IMR-90 (cell line): ENCODE measurements at regions of chr15 and their contacts with region 1.

Region 1: DNA sequence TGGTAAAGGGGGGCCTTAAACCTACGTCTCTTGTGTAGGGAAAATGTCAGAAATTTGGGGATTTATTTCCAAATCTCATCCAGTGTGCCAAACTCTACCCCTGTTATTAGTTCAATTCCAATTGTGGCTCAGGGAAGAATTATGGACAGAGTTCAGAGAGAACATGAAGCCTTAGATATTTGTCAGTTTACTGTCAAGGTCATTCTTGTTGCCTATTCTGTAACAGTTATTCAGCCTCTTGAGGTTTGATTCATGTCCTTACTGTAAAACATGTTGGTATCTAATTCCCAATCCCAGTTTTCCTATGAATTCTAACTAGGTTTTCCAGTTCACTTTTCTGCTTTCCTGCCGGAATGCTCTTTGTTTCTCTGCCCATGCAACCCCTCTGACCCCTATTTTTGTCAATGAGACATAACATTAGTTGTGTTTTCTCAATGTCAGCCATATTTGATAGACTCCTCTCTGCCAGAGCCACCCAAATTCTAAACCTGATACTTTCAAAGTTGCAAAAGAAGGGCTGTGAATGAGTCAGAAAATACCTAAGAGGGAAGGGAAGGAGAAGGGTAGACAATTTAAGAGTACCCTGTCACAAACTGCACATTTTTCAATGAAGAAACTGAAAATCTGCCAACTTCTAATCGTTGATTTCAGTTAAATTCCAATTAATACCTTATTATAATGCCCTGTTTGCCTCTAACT is 52.4 kb downstream of the ATOSA start:
- DNase-seq: no peak
- ATAC-seq: no peak
- H3K4me3 ChIP-seq: no peak overlapping the region
- H3K27ac ChIP-seq: no peak overlapping the region
- H3K4me1 ChIP-seq: no peaks in the 10 kb centered on the region
- H3K27me3 ChIP-seq: no peaks in the 10 kb centered on the region
- CTCF ChIP-seq: no peak
- POLR2A ChIP-seq: no peak
- RAD21 ChIP-seq: no peak

Region 2: GRCh38 chr15:52252781-52253180 is 374.0 kb before region 1 on chr15:
- CTCF ChIA-PET with region 1: no interaction called
- POLR2A ChIA-PET with region 1: no interaction called
- dilution Hi-C with region 1: no loop called
- in situ Hi-C with region 1: no loop called
- intact Hi-C with region 1: no loop called
- DNase-seq: peak; percentile 96
- ATAC-seq: peak; percentile 72
- H3K4me3 ChIP-seq: no peak overlapping the region
- H3K27ac ChIP-seq: peak overlapping the region; percentile 63
- H3K4me1 ChIP-seq: peaks cover 14% of the 10 kb centered on the region
- H3K27me3 ChIP-seq: no peaks in the 10 kb centered on the region
- CTCF ChIP-seq: no peak
- POLR2A ChIP-seq: no peak
- RAD21 ChIP-seq: no peak

Region 3: DNA sequence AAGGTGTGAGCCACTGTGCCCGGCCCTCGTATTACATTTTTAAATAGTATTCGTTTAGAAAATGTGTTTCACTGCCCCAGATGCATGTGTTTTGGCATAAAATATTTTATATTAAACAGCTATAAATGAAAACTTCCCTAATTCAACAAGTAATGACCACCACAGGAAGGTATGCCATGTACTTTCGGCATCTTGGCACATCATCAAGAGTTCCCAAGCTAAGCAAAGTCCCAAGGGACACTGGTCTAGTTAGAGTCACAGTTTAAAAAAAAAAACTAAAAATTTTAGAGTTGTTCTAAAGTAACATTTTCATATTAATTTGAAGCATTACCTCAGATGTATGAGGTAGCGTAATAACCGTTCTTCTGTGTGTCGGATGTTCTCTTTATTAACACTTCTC is 42.4 kb before region 1 on chr15:
- CTCF ChIA-PET with region 1: no interaction called
- POLR2A ChIA-PET with region 1: interaction called, 13 read pairs
- dilution Hi-C with region 1: no loop called
- in situ Hi-C with region 1: no loop called
- intact Hi-C with region 1: no loop called
- DNase-seq: no peak
- ATAC-seq: no peak
- H3K4me3 ChIP-seq: no peak overlapping the region
- H3K27ac ChIP-seq: no peak overlapping the region
- H3K4me1 ChIP-seq: peaks cover 2% of the 10 kb centered on the region; the same call in 1 of the 2 replicates
- H3K27me3 ChIP-seq: no peaks in the 10 kb centered on the region
- CTCF ChIP-seq: no peak
- POLR2A ChIP-seq: no peak
- RAD21 ChIP-seq: no peak

Region 4: GRCh38 chr15:52609593-52609992 is 17.2 kb before region 1 on chr15:
- CTCF ChIA-PET with region 1: no interaction called
- POLR2A ChIA-PET with region 1: no interaction called
- dilution Hi-C with region 1: no loop called
- in situ Hi-C with region 1: no loop called
- intact Hi-C with region 1: no loop called
- DNase-seq: no peak
- ATAC-seq: no peak
- H3K4me3 ChIP-seq: no peak overlapping the region
- H3K27ac ChIP-seq: no peak overlapping the region
- H3K4me1 ChIP-seq: no peaks in the 10 kb centered on the region
- H3K27me3 ChIP-seq: no peaks in the 10 kb centered on the region
- CTCF ChIP-seq: no peak
- POLR2A ChIP-seq: no peak
- RAD21 ChIP-seq: no peak

Region 5: GRCh38 chr15:52893338-52893737 is 266.5 kb after region 1 on chr15:
- CTCF ChIA-PET with region 1: no interaction called
- POLR2A ChIA-PET with region 1: no interaction called
- dilution Hi-C with region 1: no loop called
- in situ Hi-C with region 1: no loop called
- intact Hi-C with region 1: no loop called
- DNase-seq: no peak
- ATAC-seq: no peak
- H3K4me3 ChIP-seq: no peak overlapping the region
- H3K27ac ChIP-seq: no peak overlapping the region
- H3K4me1 ChIP-seq: no peaks in the 10 kb centered on the region
- H3K27me3 ChIP-seq: no peaks in the 10 kb centered on the region
- CTCF ChIP-seq: no peak
- POLR2A ChIP-seq: no peak
- RAD21 ChIP-seq: no peak